Activated CD4-positive, alpha-beta T cell treated with anti-CD3 and anti-CD28 coated beads, Interleukin-2, amount 10 ng/mL, durations not matched to agents 7 days and 5 days (primary cell): ENCODE measurements at regions of chr12 and their contacts with region 1.

Region 1: DNA sequence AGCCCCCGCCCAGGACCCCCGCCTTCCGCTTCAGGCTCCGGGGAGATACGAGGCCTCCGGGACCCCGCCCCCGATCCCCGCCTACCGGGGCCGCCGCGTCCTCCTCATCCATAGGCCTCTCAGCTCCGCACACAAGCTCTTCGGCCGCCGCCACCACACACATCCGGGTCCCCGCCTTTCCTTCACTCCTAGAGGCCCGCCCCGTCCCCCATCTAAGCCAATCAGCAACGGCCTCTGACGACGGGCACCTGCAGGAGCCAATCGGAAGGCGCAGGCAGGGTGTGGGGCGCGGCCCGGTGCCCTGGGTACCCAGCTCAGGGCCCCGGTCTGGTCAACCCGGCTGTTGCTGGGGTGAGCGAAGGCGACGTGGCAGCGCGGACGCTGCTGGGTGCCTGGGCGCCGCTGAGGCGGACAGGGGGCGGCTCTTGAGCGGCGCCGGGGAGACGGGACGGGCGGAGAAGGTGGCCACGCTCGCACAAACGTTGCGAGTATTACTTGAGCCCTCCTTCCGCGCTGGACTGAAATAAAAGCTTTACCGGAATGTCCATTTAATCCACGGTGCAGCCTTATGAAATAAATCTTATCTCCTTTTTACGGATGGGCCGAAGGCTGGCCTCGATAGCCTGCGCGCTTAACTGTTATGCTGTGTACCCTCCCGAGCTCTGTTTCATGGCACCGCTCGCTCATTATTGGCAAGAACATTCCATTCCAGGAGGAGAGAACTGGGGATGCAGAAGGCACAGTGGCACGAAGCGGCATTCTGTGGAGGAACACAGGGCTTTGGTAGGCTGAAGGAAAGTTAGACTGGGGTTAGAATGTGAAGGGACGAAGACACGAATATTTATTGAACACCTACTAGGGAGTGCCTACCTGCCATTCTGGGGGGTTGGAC is at the start of gene SPRYD3:
- DNase-seq: peak; percentile 97
- H3K4me3 Mint-ChIP-seq: peak within 1 kb of the TSS; percentile 90
- H3K27ac Mint-ChIP-seq: peak within 1 kb of the TSS; percentile 95
- H3K4me1 Mint-ChIP-seq: peaks cover 37% of the 10 kb centered on the region
- H3K27me3 Mint-ChIP-seq: no peaks in the 10 kb centered on the region
- total RNA-seq, gene SPRYD3: 19.0 to 20.2 TPM

Region 2: DNA sequence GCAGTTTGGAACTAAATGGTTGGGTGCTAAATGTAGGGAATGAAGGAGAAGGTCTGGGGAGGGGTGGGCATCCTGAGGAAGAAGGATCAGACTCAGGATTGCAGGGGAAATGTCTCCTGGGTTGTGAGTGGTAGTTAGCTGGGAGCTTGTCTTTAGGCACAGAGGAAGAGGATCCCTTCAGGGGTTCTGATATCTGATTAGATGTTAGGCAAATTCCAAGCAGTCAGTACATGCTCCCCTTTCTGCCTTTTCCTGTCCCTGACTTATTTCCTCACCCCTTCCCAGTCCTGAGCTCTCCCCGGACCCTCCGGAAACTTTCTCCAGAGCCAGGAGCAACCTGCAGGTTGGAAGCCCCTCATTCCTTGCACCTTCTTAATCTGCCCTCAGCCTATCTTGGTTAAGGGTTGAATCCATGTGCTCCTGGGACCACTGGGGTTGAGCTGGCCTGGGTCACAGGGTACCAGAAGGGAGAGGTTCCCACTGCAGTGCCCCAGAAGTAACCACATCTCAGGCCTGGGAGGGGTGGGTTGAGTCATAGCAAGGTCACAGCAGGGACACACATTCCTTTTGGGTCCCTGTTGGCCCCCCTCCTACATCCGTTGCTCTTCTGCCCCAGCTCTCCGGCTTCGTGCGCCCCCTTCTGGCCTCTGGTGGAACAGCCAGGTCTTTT is 19.6 kb after region 1 on chr12:
- CTCF ChIA-PET with region 1: interaction called, 17 read pairs
- POLR2A ChIA-PET with region 1: no interaction called
- DNase-seq: peak; percentile 91
- H3K4me3 Mint-ChIP-seq: peak overlapping the region; percentile 18
- H3K27ac Mint-ChIP-seq: peak overlapping the region; percentile 60
- H3K4me1 Mint-ChIP-seq: peaks cover 63% of the 10 kb centered on the region
- H3K27me3 Mint-ChIP-seq: peaks cover 22% of the 10 kb centered on the region